Right ventricle myocardium superior (tissue), 1 donor: ENCODE measurements at regions of chr19 and their contacts with region 1.

Region 1: DNA sequence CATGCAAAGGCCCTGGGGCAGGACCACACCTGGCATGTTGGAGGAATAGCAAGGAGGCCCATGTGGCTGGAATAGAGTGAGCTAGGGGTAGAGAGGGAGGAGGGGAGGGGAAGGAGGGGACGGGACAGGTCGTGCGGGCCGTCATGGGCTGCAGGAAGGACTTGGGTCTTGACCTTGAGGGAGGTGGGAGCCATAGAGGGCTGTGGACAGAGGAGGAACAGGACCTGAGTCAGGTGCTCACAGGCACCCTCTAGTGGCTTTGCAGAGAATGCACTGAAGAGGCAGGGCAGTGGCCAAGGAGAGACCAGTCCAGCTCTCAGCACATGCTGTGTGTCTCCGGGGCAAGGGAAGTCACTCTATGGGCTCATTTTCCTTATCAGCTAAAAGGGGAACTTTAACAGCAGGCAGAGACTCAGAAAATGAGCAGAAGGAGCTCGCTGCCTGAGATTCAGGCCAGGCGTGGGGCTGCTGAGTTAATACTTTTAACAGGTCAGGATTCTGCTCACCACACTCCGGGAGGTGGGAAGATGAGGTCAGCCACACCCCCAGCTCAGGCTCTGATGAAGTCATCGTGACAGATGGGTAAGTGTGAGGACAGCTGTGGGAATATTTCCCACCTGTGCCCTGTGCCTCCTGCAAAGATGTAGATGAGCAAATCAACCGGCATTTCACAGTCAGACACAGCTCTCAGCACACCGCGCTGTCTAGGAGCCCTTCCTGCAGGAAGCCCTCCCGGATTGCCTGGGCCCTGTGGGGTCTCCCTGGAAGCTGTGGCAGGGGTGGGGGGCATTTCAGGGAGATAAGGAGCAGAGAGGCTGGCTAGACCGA is 6.0 kb upstream of the TNFAIP8L1 start:
- DNase-seq: peak; percentile 73
- ATAC-seq: peak; percentile 65

Region 2: GRCh38 chr19:4576016-4576933 is 57.1 kb before region 1 on chr19:
- intact Hi-C with region 1: loop called (anchors 5 kb)
- DNase-seq: peak; percentile 83
- ATAC-seq: peak; percentile 71